Activated CD4-positive, alpha-beta T cell treated with anti-CD3 and anti-CD28 coated beads for 36 hours (primary cell): ENCODE measurements at regions of chr15 and their contacts with region 1.

Region 1: GRCh38 chr15:48190932-48191573 is 412 bp upstream of the CTXN2 start:
- DNase-seq: peak; percentile 71
- ATAC-seq: no peak
- H3K4me3 Mint-ChIP-seq: peak overlapping the region; percentile 4
- H3K27ac Mint-ChIP-seq: no peak overlapping the region
- H3K4me1 Mint-ChIP-seq: peaks cover 6% of the 10 kb centered on the region
- H3K27me3 Mint-ChIP-seq: peaks cover 40% of the 10 kb centered on the region

Region 2: GRCh38 chr15:48144889-48145288 is 46.2 kb before region 1 on chr15:
- CTCF ChIA-PET with region 1: no interaction called
- POLR2A ChIA-PET with region 1: no interaction called
- intact Hi-C with region 1: loop called in 1 of 2 experiments (anchors 5 kb)
- DNase-seq: no peak
- ATAC-seq: no peak
- H3K4me3 Mint-ChIP-seq: no peak overlapping the region
- H3K27ac Mint-ChIP-seq: no peak overlapping the region
- H3K4me1 Mint-ChIP-seq: peaks cover 3% of the 10 kb centered on the region
- H3K27me3 Mint-ChIP-seq: no peaks in the 10 kb centered on the region